Transverse colon (tissue), 4 donors: ENCODE measurements at regions of chr7 and their contacts with region 1.

Region 1: DNA sequence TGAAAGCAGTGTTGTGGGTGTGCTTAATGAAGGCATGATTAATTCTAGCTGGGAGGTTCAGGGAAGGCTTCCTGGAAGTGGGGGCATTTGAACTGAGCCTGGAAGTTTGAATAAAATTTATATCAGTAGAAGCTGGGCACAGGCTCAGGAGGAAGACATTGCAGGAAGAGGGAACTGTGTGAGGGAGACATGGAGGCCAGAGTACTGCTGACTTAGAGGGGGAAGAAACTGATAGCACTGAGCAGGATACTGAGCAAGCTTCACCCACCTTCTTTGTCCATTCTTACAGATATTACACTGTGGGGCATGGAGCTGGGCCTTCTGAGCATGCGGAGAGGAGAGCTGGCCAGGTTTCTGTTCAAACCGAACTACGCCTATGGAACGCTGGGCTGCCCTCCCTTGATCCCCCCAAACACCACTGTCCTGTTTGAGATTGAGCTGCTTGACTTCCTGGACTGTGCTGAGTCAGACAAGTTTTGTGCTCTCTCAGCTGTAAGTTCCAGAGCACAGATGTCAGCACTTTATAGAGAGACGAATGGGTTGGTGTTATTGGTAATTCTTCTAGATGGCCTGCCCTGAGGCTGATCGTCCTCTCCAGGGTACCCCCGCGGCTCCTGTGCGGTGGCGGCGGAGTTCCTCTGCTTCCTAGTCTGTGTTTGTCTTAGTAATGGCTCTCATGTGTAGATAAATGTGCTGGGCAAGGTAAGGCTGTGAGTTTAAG is 2.1 kb downstream of the FKBP6 start:
- DNase-seq: no peak
- H3K4me3 ChIP-seq: no peak overlapping the region
- H3K27ac ChIP-seq: no peak overlapping the region
- H3K4me1 ChIP-seq: no peaks in the 10 kb centered on the region
- H3K27me3 ChIP-seq: no peaks in the 10 kb centered on the region
- CTCF ChIP-seq: no peak
- EP300 ChIP-seq: no peak
- POLR2A ChIP-seq: no peak

Region 2: DNA sequence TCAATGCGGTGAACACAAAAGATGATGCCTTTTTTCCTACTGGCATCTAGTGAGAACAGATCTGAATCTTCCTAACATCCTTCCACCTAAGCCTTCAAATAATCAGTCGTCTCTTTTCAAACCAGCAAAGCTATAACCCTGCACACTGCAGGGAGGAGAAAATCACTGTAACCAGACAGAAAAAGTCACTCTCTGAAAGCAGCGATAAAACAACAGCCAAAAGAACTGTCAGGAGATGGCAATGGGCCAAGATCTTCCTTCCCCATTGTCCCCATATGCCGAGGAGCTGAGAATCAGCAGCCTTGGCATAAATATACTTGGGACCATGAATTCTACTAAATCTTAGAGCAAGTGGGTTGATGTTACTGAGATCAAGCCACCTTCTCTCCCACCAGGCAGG is 116.7 kb after region 1 on chr7:
- in situ Hi-C with region 1: loop called in 2 of 4 experiments (anchors 10 kb)
- intact Hi-C with region 1: no loop called
- DNase-seq: no peak
- H3K4me3 ChIP-seq: no peak overlapping the region
- H3K27ac ChIP-seq: no peak overlapping the region
- H3K4me1 ChIP-seq: no peaks in the 10 kb centered on the region
- H3K27me3 ChIP-seq: no peaks in the 10 kb centered on the region
- CTCF ChIP-seq: no peak
- EP300 ChIP-seq: no peak
- POLR2A ChIP-seq: no peak